HEK293 (cell line): ENCODE measurements at regions of chr9 and their contacts with region 1.

Region 1: DNA sequence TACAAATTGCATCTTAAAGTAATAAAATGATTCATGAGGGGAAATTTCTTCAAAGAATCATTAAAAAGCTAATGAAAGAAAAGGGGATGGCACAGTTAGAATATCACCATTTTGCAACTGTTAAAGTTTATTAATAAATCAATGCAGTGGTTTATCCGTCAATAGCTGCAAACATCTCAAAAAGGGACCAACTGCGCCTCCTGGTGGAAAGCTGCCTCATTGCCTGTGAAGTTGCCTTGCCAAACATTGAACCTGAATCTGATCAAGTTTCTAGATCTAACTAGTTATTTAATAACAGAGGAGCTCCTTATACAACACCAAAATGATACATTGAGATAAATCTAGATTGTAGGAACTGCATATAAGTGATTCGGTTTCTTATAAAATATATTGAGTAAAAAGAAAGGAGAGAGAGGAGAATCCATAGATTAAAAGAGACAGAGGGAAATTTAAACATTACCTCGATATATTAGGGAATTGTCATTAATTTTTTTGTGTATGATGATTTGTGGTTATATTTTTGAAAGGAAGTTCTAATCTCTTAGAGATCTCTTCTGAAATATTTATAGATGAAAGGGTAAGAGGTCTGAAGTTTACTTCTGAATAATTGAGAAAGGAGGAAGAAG is 6.9 kb upstream of the NDUFB6 start:
- H3K4me3 ChIP-seq: no peak overlapping the region
- H3K27ac ChIP-seq: no peak overlapping the region
- H3K4me1 ChIP-seq: no peaks in the 10 kb centered on the region; the same call in 1 of the 2 replicates
- CTCF ChIP-seq: no peak

Region 2: DNA sequence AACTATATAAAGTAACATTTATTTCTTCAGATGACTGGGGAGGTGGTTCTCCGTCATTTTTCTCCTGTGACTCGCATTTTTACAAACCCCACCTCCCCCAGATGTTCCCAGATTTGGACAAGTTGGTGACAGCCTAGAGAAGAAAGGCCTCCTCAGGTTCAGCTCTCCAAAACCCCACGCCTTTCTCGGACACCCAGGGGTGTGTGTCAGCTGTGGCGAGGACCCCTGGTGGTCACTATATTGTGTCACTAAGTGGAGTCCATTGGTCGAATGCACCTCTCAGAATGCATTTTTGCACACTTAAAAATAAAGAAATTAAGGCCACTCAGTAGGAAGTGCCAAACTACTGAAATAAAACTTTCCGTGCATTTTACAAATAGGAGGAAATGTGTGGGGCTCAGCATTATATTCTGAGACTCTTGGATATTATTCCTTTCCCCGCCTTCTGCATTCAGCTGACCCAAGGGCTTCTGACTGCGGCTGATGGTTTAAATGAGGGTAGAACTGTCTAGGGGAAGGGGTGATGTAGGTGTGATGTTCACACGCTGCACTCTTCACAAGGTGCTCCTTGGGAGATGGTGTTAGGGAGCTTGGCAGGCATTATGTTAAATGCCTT is 147.8 kb before region 1 on chr9:
- CTCF ChIA-PET with region 1: interaction called, 12 read pairs
- POLR2A ChIA-PET with region 1: no interaction called
- H3K4me3 ChIP-seq: no peak overlapping the region
- H3K27ac ChIP-seq: no peak overlapping the region
- H3K4me1 ChIP-seq: no peaks in the 10 kb centered on the region
- CTCF ChIP-seq: peak; percentile 20; the same call in 1 of the 2 replicates

Region 3: GRCh38 chr9:32526041-32526706 is 53.6 kb before region 1 on chr9 and contains the start of gene RIGI:
- CTCF ChIA-PET with region 1: interaction called, 16 read pairs
- POLR2A ChIA-PET with region 1: no interaction called
- H3K4me3 ChIP-seq: peak within 1 kb of the TSS; percentile 53
- H3K27ac ChIP-seq: peak within 1 kb of the TSS; percentile 69
- H3K4me1 ChIP-seq: peaks cover 4% of the 10 kb centered on the region; the same call in 1 of the 2 replicates
- CTCF ChIP-seq: peak; percentile 10; the same call in 1 of the 2 replicates

Region 4: GRCh38 chr9:32566770-32567169 is 13.0 kb before region 1 on chr9:
- CTCF ChIA-PET with region 1: interaction called, 12 read pairs
- POLR2A ChIA-PET with region 1: no interaction called
- H3K4me3 ChIP-seq: no peak overlapping the region
- H3K27ac ChIP-seq: no peak overlapping the region
- H3K4me1 ChIP-seq: peaks cover 4% of the 10 kb centered on the region; the same call in 1 of the 2 replicates
- CTCF ChIP-seq: no peak

Region 5: DNA sequence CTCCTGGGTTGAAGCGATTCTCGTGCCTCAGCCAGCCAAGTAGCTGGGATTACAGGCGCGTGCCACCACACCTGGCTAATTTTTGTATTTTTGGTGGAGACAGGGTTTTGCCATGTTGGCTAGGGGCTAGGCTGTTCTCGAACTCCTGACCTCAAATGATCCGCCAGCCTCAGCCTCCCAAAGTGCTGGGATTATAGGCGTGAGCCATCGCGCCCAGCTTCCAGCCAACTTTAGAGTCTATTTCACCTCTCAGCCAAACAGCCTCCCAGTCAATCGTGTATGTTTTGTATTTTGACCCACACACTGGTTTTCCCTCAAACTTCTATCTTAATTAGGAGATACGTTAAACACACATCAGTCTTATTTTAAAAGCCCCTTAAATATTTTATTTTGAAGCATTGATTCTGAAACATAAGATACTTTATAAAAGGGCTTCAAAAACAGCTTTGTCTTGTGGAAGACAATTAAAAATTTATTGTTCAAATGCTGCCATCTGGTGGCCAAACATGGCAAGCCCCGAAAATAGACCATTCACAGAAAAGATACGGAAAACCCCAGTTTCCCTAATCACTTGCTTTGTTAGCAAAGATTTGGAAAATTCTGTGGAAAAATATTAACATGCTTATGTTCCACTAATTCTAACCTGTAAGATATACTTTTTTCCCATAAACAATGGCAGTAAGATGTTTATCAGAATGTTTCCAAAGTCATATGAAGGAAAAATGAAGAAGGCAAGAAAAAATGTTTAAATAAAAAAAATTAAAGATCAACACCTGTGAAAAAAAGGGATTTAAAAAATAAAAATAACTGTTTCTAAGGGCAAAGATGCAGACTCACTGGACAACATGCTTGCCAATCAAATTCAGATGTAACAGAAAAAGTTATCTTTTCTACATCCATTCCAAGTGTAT is 388.5 kb after region 1 on chr9:
- CTCF ChIA-PET with region 1: interaction called, 309 read pairs
- POLR2A ChIA-PET with region 1: no interaction called
- H3K4me3 ChIP-seq: no peak overlapping the region
- H3K27ac ChIP-seq: no peak overlapping the region
- H3K4me1 ChIP-seq: no peaks in the 10 kb centered on the region
- CTCF ChIP-seq: no peak